ENCODE measurements at regions of chr22 and their contacts with region 1.

Region 1: GRCh38 chr22:43014869-43015676 is at the start of gene PACSIN2:
- DNase-seq: peak; percentile 100
- H3K4me3 ChIP-seq: peak within 1 kb of the TSS; percentile 84 to 87 (median 85)
- H3K27ac ChIP-seq: peak within 1 kb of the TSS; percentile 84 to 95
- H3K4me1 ChIP-seq: peaks cover 0 to 4% of the 10 kb centered on the region in 2 donors
- H3K27me3 ChIP-seq: no peaks in the 10 kb centered on the region
- CTCF ChIP-seq: peak in 1 of 3 donors; percentile 9
- POLR2A ChIP-seq: peak; percentile 93
- total RNA-seq, gene PACSIN2: 43.8 to 82.7 (median 72.4) TPM

Region 2: GRCh38 chr22:41394012-41394356 is 1621.1 kb before region 1 on chr22:
- intact Hi-C with region 1: loop called (anchors 5 kb)
- DNase-seq: no peak
- H3K4me3 ChIP-seq: peak overlapping the region in 2 of 3 donors; percentile 2 to 32
- H3K27ac ChIP-seq: peak overlapping the region; percentile 89 to 92
- H3K4me1 ChIP-seq: peaks cover 0 to 3% of the 10 kb centered on the region in 2 donors
- H3K27me3 ChIP-seq: no peaks in the 10 kb centered on the region
- CTCF ChIP-seq: no peak
- POLR2A ChIP-seq: no peak

Region 3: DNA sequence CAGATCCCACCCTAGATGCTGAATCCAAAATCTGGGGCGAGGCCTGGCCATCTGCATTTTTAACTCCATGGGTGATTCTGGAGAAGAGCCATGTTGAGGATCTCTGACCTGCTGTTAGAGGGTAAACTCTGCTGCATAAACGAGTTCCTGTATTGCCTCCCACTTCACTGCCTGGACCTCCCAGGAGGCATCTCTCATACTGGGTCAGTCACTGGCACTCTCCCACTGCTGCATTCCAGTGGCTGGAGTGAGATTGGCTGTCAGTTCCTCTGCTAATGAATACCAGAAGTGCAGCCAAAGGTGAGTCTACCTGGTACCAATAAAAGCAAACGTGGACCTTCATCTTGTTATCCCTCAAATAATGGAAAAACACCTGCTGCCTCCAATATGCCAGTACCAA is 410.7 kb before region 1 on chr22:
- intact Hi-C with region 1: no loop called
- DNase-seq: peak in 1 of 2 donors; percentile 73
- H3K4me3 ChIP-seq: no peak overlapping the region
- H3K27ac ChIP-seq: peak overlapping the region; percentile 66 to 86
- H3K4me1 ChIP-seq: peaks cover 9 to 12% of the 10 kb centered on the region in 2 donors
- H3K27me3 ChIP-seq: no peaks in the 10 kb centered on the region
- CTCF ChIP-seq: no peak
- POLR2A ChIP-seq: no peak

Region 4: DNA sequence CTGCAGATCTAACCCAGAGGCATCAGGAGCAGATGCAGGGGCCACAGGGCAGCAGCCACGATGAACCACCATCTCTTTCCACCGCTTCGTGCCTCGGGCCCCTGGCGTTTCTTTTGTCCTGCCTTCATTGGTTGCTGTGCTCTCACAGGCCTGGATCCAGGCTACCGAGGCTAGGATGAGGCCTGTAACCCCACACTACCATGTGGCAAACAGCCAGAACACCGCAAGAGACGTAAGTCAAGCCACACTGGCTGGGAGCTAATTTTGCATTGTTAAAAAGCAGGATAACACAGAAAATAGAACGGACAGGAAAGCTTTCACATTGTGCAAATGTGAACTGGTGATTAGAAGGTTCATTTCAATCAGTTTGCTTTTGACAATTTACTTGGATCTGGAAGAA is 142.3 kb before region 1 on chr22:
- intact Hi-C with region 1: loop called (anchors 10 kb)
- DNase-seq: no peak
- H3K4me3 ChIP-seq: no peak overlapping the region
- H3K27ac ChIP-seq: no peak overlapping the region
- H3K4me1 ChIP-seq: peaks cover 11 to 12% of the 10 kb centered on the region in 2 donors
- H3K27me3 ChIP-seq: no peaks in the 10 kb centered on the region
- CTCF ChIP-seq: no peak
- POLR2A ChIP-seq: no peak

Region 5: DNA sequence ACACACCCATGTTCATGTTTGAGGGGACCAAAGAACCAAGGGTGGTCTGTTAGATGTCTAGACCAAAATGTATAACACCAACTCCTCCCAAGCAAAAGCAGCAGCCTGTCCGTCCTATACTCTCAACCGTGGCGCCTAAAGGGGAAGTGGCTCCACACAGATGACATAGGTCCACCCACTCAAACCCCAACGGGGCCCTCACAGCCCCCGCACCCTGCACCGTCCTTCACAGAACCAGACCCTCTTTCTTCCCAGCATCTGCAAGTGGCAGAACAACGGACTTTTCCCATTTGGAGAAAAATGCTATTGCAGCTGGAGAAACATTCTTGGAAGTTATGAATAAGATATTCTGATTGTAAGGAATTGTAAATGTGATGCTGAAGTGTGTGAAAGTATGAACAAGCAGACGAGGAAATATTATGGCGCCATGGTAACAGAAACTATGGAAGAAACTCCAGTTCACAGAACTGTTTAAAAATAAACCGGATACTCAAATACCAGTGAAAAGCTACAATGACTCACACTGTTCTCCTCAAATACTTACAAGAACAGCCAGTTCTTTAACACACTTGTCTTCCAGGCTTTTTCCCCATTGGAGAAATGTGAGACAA is 81.5 kb before region 1 on chr22:
- intact Hi-C with region 1: no loop called
- DNase-seq: no peak
- H3K4me3 ChIP-seq: peak overlapping the region in 1 of 3 donors; percentile 47
- H3K27ac ChIP-seq: peak overlapping the region; percentile 88 to 98
- H3K4me1 ChIP-seq: peaks cover 37 to 53% of the 10 kb centered on the region in 2 donors
- H3K27me3 ChIP-seq: no peaks in the 10 kb centered on the region
- CTCF ChIP-seq: peak in 1 of 3 donors; percentile 17
- POLR2A ChIP-seq: no peak